BJ (cell line): ENCODE measurements at regions of chr1 and their contacts with region 1.

Region 1: GRCh38 chr1:180178511-180179161 is 24.0 kb downstream of the QSOX1 start:
- DNase-seq: no peak
- H3K4me3 ChIP-seq: no peak overlapping the region
- H3K27me3 ChIP-seq: no peaks in the 10 kb centered on the region
- CTCF ChIP-seq: peak; percentile 98

Region 2: DNA sequence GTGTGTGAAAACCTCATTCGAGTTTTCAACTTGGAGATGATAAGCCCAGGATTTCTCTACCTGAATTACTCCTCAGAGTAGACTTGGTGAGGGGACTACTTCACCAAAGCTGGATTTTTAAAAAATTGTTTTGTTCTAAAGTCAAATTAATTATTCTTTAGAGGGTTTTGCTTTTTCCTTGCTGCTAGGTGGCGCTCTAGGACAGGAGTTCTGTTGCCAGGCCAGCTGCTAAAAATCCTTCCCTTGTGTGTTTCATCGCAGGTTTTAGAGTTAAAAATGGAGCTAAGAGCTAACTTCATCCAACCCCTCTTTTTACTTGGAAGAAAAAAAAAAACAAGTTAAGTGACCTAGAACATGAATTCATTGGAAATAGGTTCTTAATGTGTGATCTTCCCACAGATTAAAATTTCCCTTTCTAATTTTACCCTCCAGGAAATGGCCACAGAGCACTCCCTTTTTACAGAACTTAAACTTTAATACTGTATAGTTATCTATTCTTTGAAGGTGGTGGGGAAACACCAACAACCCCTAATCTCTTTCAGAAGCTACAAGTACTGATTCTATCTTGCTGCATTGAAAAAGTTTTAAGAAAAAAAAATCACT is 472.2 kb before region 1 on chr1:
- CTCF ChIA-PET with region 1: interaction called, 10 read pairs
- POLR2A ChIA-PET with region 1: no interaction called
- DNase-seq: no peak
- H3K4me3 ChIP-seq: no peak overlapping the region
- H3K27me3 ChIP-seq: no peaks in the 10 kb centered on the region; the same call in 1 of the 2 replicates
- CTCF ChIP-seq: peak; percentile 77

Region 3: DNA sequence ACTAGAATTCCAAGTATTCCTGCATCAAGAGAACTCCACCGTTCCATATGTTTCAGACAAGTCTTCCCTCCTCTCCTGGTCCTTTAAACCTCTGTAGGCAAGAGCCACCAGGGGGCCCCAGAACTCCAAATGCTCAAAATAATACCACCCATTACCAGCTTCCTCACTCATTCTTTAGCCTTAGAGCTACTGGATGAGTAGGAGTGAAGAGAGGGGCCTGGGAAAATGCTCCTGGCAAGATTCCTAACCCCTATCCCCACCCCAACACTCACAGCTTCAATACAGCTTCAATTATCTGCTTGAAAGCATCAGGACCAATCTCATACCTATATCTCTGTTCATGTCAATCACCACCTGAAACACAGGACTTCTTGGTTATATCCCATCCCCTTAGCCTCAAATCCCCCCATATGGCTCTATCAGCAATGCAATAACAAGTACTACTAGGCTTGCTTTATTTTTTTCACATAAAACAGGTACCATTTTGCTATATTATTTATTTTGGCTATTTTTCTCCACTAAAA is 310.8 kb before region 1 on chr1:
- CTCF ChIA-PET with region 1: interaction called, 77 read pairs
- POLR2A ChIA-PET with region 1: no interaction called
- DNase-seq: no peak
- H3K4me3 ChIP-seq: no peak overlapping the region
- H3K27me3 ChIP-seq: no peaks in the 10 kb centered on the region
- CTCF ChIP-seq: peak; percentile 87

Region 4: GRCh38 chr1:180229152-180229973 is 50.7 kb after region 1 on chr1:
- CTCF ChIA-PET with region 1: no interaction called
- POLR2A ChIA-PET with region 1: no interaction called
- DNase-seq: no peak
- H3K4me3 ChIP-seq: peak overlapping the region; percentile 49
- H3K27me3 ChIP-seq: peaks cover 51% of the 10 kb centered on the region
- CTCF ChIP-seq: no peak